Gastrocnemius medialis (tissue), 4 donors: ENCODE measurements at regions of chr12 and their contacts with region 1.

Region 1: DNA sequence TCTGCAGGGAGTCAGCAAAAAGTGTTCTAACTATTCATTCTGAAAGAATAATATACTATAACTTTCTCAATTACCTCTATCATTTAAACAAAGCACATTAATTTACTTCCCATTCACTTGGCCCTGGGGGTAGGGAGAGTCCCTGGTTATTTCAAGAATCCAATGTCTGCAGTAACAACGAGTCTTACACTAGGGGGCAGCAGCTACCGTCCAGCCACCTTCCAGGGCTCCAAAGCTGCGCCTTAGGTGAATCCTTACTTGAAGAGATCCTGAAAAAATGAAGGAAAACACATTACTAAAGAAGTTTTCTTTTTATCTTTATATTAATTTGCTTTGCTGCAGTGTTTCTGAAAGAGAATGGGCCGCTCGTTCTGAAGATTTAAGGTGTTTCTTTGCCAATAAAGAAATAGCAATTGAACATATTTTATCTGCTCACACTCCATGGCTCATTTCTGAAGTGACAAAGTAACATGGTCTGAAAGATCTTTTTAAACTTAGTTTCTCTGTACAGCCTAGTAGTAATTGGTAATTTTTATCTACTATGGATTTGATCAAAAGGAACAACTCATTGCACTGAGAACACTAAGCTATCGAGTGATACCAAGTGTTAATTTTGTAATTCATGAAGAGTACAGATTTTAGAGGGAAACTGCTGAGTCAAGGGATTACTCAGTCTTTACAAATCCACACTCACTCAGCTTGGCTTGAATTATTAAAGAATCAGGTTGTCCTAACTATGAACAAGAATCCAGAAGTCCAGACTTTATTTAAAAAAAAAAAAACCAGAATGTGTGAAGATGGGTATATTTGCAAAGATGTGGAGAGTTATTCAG is 27.6 kb downstream of the BHLHE41 start:
- DNase-seq: peak; percentile 49 to 67
- ATAC-seq: peak; percentile 95 to 98
- H3K4me3 ChIP-seq: no peak overlapping the region
- H3K27ac ChIP-seq: no peak overlapping the region
- H3K4me1 ChIP-seq: peaks cover 4 to 5% of the 10 kb centered on the region in 2 donors
- H3K27me3 ChIP-seq: no peaks in the 10 kb centered on the region
- CTCF ChIP-seq: peak; percentile 84 to 98 (median 88)
- POLR2A ChIP-seq: no peak

Region 2: DNA sequence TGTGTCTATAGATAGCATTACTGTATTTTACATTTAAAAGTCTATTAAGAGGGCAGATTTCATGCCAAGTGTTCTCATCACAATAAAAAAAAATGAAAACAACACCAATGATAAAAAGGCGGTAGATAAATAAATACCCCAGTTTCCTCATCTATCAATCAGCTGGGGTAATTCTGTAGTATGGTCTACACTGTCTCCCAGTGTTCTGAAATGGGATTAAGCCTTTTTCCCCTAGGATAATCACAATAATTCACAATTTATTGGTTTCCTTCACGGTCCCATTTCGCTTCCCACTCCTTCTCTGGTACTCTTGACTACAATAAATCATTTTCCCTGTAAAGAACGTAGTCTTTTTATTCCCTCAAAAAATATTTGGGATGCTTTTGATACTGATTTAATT is 212.4 kb after region 1 on chr12:
- in situ Hi-C with region 1: loop called in 1 of 4 experiments (anchors 10 kb)
- intact Hi-C with region 1: loop called (anchors 10 kb)
- DNase-seq: no peak
- ATAC-seq: no peak
- H3K4me3 ChIP-seq: no peak overlapping the region
- H3K27ac ChIP-seq: no peak overlapping the region
- H3K4me1 ChIP-seq: no peaks in the 10 kb centered on the region
- H3K27me3 ChIP-seq: no peaks in the 10 kb centered on the region
- CTCF ChIP-seq: no peak
- POLR2A ChIP-seq: no peak

Region 3: GRCh38 chr12:26523708-26524150 is 426.5 kb after region 1 on chr12:
- in situ Hi-C with region 1: no loop called
- intact Hi-C with region 1: loop called (anchors 5 kb)
- DNase-seq: peak; percentile 88 to 95
- ATAC-seq: peak; percentile 100
- H3K4me3 ChIP-seq: no peak overlapping the region
- H3K27ac ChIP-seq: peak overlapping the region; percentile 64 to 77 (median 66)
- H3K4me1 ChIP-seq: peaks cover 0 to 10% of the 10 kb centered on the region in 2 donors
- H3K27me3 ChIP-seq: no peaks in the 10 kb centered on the region
- CTCF ChIP-seq: peak in 2 of 5 experiments; percentile 11 to 14
- POLR2A ChIP-seq: no peak

Region 4: GRCh38 chr12:26651566-26652188 is 554.4 kb after region 1 on chr12:
- in situ Hi-C with region 1: loop called (anchors 10 to 25 kb)
- intact Hi-C with region 1: loop called (anchors 1 kb)
- DNase-seq: no peak
- ATAC-seq: peak in 1 of 2 donors; percentile 70
- H3K4me3 ChIP-seq: no peak overlapping the region
- H3K27ac ChIP-seq: no peak overlapping the region
- H3K4me1 ChIP-seq: no peaks in the 10 kb centered on the region
- H3K27me3 ChIP-seq: no peaks in the 10 kb centered on the region
- CTCF ChIP-seq: peak; percentile 50 to 77 (median 73)
- POLR2A ChIP-seq: no peak